Endothelial cell of umbilical vein (primary cell): ENCODE measurements at regions of chr10 and their contacts with region 1.

Region 1: DNA sequence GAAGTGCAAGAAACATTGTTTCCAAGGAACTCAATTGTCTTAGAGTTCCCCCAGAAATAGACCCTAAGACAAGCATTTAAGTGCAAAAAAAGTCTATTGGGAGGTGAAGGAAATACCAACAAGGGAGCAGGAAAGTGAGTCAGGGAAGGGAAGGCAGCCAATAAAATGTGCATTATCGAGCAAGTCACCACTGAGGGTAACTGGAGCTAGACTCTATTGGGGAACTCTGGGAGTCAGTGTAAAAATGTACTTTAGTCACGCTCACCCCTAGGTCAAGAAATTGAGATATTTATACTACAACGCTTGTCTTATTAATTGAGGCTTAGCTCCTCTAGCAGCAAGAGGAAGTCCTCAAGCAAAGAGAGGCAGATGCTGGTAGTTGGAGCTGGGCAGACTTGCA is 137.7 kb downstream of the RTKN2 start:
- DNase-seq: peak; percentile 99
- H3K4me3 ChIP-seq: no peak overlapping the region
- H3K27ac ChIP-seq: peak overlapping the region; percentile 78
- H3K4me1 ChIP-seq: peaks cover 29% of the 10 kb centered on the region
- H3K27me3 ChIP-seq: no peaks in the 10 kb centered on the region
- CTCF ChIP-seq: no peak
- POLR2A ChIP-seq: peak; percentile 51

Region 2: DNA sequence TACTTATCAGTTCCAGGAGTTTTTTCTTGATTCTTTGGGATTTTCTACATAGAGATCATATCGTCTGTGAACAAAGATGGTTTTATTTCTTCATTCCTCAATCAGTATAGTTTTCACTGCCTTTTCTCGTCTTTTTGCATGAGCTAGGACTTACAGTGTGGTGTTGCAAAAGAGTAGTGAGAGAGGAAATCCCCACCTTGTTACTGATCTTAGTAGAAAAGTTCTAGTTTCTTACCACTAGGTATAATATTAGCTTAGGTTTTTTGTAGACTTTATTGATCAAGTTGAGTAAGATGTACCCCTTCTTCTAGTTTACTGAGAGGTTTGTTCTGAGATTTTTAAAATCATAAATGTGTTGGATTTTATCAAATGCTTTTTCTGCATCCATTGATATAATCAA is 801.1 kb before region 1 on chr10:
- CTCF ChIA-PET with region 1: no interaction called
- POLR2A ChIA-PET with region 1: no interaction called
- dilution Hi-C with region 1: no loop called
- intact Hi-C with region 1: no loop called
- DNase-seq: no peak
- H3K4me3 ChIP-seq: no peak overlapping the region
- H3K27ac ChIP-seq: no peak overlapping the region
- H3K4me1 ChIP-seq: no peaks in the 10 kb centered on the region
- H3K27me3 ChIP-seq: peaks cover 0 to 2% of the 10 kb centered on the region in 2 experiments
- CTCF ChIP-seq: no peak
- POLR2A ChIP-seq: no peak

Region 3: DNA sequence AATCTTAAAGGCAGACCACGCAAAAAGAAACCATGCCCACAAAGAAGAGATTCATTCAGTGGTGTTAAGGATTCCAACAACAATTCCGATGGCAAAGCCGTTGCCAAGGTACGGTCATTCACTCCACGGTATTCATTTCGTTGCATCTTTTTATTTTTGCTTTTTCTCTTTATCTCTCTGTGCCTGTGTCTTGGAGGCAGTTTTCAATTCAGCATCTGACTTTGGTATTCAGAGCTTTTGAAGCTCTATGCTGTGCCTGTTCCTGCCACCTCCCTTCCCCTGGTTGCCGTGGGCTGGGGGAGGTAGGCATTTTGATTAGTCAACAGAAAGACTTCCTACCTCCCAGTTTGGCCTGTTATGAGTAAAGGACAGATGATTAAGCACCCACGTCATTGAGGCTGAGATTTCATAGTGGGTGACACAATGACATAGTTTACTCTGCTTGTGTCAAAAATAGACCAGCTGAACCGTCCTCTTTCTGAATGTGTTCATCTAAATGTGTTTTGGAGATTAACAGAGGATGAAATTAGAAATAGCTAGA is 80.0 kb before region 1 on chr10:
- CTCF ChIA-PET with region 1: interaction called, 3 read pairs
- POLR2A ChIA-PET with region 1: no interaction called
- dilution Hi-C with region 1: no loop called
- intact Hi-C with region 1: loop called (anchors 1 kb)
- DNase-seq: peak; percentile 88
- H3K4me3 ChIP-seq: peak overlapping the region in 2 of 3 experiments; percentile 36 to 60
- H3K27ac ChIP-seq: peak overlapping the region; percentile 63
- H3K4me1 ChIP-seq: peaks cover 46% of the 10 kb centered on the region
- H3K27me3 ChIP-seq: no peaks in the 10 kb centered on the region
- CTCF ChIP-seq: no peak
- POLR2A ChIP-seq: no peak

Region 4: GRCh38 chr10:62099299-62099698 is 31.6 kb before region 1 on chr10:
- CTCF ChIA-PET with region 1: no interaction called
- POLR2A ChIA-PET with region 1: no interaction called
- dilution Hi-C with region 1: no loop called
- intact Hi-C with region 1: no loop called
- DNase-seq: no peak
- H3K4me3 ChIP-seq: no peak overlapping the region
- H3K27ac ChIP-seq: no peak overlapping the region
- H3K4me1 ChIP-seq: peaks cover 3% of the 10 kb centered on the region
- H3K27me3 ChIP-seq: no peaks in the 10 kb centered on the region
- CTCF ChIP-seq: no peak
- POLR2A ChIP-seq: no peak

Region 5: DNA sequence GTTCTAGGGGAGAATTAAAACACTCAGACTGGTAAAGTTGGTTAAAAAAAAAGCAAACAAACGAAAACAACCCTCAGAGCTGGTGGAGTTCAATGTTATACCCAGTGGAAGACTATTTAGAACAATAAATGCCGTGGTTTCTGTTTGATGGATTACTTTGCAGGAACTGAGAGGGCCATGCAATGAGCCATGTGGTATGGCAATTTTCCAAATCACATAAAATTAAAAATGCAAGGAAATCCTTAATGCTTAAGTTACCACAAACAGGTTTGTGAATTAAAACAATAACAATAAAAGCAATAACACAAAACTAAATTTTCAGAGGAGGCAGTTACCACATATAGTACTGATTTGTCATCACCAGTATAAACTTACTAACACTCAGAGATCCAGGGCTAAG is 40.8 kb after region 1 on chr10:
- CTCF ChIA-PET with region 1: no interaction called
- POLR2A ChIA-PET with region 1: no interaction called
- dilution Hi-C with region 1: no loop called
- intact Hi-C with region 1: loop called (anchors 1 kb)
- DNase-seq: peak; percentile 80
- H3K4me3 ChIP-seq: no peak overlapping the region
- H3K27ac ChIP-seq: no peak overlapping the region
- H3K4me1 ChIP-seq: no peaks in the 10 kb centered on the region
- H3K27me3 ChIP-seq: no peaks in the 10 kb centered on the region
- CTCF ChIP-seq: no peak
- POLR2A ChIP-seq: no peak

Region 6: GRCh38 chr10:62231371-62231770 is 100.4 kb after region 1 on chr10:
- CTCF ChIA-PET with region 1: interaction called, 3 read pairs
- POLR2A ChIA-PET with region 1: no interaction called
- dilution Hi-C with region 1: no loop called
- intact Hi-C with region 1: loop called (anchors 1 kb)
- DNase-seq: peak; percentile 78
- H3K4me3 ChIP-seq: no peak overlapping the region
- H3K27ac ChIP-seq: peak overlapping the region; percentile 76
- H3K4me1 ChIP-seq: peaks cover 21% of the 10 kb centered on the region
- H3K27me3 ChIP-seq: no peaks in the 10 kb centered on the region
- CTCF ChIP-seq: no peak
- POLR2A ChIP-seq: no peak

Region 7: DNA sequence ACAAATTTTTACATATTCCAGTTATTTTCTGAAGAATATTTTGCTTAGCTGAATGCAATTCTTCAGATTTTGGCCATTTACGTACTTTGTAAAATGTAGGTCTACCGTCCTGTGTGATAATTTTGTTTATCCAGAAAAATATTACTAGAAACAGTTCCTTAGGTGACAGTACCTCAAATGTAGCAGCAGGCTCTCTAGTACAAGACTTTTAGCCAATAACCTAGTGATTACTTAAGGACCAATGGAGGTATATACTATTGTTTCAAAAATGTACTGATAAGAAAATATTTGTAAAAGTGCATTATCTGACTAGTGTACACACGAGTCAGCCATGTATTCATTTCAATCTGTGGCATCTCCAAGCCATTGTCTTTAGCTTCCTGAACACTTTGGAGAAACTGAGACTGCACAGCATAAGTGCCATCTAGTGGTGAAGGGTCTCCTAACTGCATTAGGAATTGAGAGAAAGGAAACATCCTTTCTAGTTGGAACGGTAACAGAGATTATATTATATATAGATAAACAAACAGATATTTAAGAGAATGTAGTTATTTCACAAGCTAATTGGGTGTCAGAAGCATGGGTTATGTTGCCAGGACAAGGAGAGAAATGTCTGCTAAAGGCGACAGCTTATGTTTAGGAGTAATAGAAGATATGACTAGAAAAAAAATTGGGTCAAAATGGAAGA is 114.0 kb after region 1 on chr10:
- CTCF ChIA-PET with region 1: interaction called, 5 read pairs
- POLR2A ChIA-PET with region 1: no interaction called
- dilution Hi-C with region 1: no loop called
- intact Hi-C with region 1: loop called (anchors 1 kb)
- DNase-seq: peak; percentile 86
- H3K4me3 ChIP-seq: no peak overlapping the region
- H3K27ac ChIP-seq: no peak overlapping the region
- H3K4me1 ChIP-seq: peaks cover 17% of the 10 kb centered on the region
- H3K27me3 ChIP-seq: no peaks in the 10 kb centered on the region
- CTCF ChIP-seq: peak; percentile 63 to 71
- POLR2A ChIP-seq: no peak